HEK293 (cell line): ENCODE measurements at regions of chr10 and their contacts with region 1.

Region 1: DNA sequence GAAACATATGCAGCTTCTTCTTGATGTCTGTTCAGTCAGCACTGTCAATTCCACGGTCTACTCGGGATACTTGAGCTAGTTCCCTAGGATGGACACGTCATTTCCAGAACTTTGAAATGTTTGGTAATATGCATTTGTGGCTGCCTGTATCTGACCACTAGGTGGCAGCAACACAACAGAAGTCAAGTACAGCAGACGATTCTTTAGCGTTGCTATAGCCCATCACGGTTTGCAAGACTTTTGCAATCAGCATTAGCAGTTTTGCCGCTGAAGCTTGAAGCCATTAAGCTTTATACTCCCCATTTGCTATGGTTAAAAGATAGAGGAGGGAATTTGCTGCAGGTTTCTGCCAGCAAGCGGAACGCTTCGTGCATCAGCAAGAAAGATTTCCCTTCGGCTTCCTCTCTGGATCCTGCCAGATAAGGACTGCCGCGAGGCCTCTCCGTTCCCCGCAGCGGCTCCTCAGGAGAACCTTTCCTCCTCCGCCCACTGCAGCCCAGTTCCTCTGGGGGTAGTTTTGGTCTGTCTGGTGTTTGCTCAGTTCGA is 63.5 kb downstream of the ABCC2 start:
- H3K4me3 ChIP-seq: no peak overlapping the region
- H3K27ac ChIP-seq: no peak overlapping the region
- H3K4me1 ChIP-seq: no peaks in the 10 kb centered on the region
- CTCF ChIP-seq: peak; percentile 87; the same call in 1 of the 2 replicates

Region 2: DNA sequence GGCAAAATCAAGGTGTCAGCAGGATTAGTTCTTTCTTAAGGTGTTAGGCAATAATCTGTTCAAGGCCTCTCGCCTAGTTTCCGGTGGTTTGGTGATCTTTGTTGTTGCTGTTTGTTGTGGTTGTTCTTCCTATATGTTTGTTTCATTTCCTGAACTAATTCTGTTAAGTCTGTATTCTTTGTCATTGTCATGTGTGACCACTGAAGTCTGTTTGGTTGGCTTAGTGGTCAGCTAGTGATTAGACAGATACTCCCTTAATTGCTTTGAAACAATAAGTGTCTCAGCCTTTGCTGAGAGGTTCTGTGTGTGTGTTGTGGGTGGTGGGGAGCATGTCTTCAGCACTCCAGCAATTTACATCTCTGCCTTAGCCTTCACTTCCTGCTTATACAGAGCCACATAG is 17.4 kb before region 1 on chr10:
- CTCF ChIA-PET with region 1: interaction called, 14 read pairs
- POLR2A ChIA-PET with region 1: no interaction called
- H3K4me3 ChIP-seq: no peak overlapping the region
- H3K27ac ChIP-seq: no peak overlapping the region
- H3K4me1 ChIP-seq: no peaks in the 10 kb centered on the region
- CTCF ChIP-seq: no peak

Region 3: GRCh38 chr10:99834410-99834809 is 11.5 kb before region 1 on chr10:
- CTCF ChIA-PET with region 1: interaction called, 14 read pairs
- POLR2A ChIA-PET with region 1: no interaction called
- H3K4me3 ChIP-seq: no peak overlapping the region
- H3K27ac ChIP-seq: no peak overlapping the region
- H3K4me1 ChIP-seq: no peaks in the 10 kb centered on the region
- CTCF ChIP-seq: no peak